ENCODE measurements at regions of chr3 and their contacts with region 1.

Region 1: DNA sequence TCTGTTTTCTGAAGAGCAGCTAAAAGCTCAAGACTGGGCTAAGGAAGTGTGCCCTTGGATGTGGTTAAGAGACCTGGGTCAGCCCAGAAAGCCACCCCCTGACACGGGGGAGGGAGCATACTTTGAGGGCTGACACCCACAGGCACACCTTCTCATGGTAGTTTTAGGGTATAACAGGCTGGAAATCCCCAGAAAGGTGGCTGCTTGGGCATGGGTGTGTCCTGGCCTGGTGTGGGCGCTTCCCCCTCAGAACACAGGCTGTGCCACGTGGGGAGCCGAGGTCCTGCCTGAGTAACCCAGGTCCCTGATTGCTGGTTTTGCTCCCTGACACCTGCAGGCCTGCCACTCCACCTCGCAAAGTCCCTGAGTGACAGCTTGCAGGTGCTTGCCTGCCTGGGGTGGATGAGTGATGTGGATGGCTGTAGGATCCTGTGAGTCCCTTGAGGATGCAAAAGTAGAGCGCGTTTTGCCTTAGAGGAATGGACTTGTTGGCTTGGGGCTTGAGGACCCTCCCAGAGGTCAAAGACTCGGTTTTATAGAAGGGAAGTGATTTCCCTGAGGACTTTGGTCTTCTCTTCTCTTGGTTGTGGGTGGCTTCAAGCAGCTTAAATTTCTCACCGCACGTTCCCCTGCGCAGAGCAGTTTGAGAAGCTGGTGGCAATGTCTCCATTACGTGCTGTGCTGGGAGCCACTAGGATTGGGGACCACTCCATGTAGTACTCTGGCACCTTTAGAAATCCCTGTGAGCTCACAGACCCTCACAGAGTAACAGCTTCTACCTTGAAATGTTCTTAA is 94.4 kb downstream of the DNASE1L3 start:
- DNase-seq: peak; percentile 20 to 85 (median 72)
- ATAC-seq: peak; percentile 95
- H3K4me3 ChIP-seq: no peak overlapping the region
- H3K4me3 Mint-ChIP-seq: peak overlapping the region; percentile 36 to 72 (median 62)
- H3K27ac ChIP-seq: peak overlapping the region; percentile 46
- H3K27ac Mint-ChIP-seq: peak overlapping the region; percentile 63 to 91 (median 83)
- H3K4me1 ChIP-seq: peaks cover 27 to 28% of the 10 kb centered on the region in 2 donors
- H3K4me1 Mint-ChIP-seq: peaks cover 12 to 45% (median 37%) of the 10 kb centered on the region in 7 donors
- H3K27me3 ChIP-seq: no peaks in the 10 kb centered on the region
- H3K27me3 Mint-ChIP-seq: no peaks in the 10 kb centered on the region

Region 2: DNA sequence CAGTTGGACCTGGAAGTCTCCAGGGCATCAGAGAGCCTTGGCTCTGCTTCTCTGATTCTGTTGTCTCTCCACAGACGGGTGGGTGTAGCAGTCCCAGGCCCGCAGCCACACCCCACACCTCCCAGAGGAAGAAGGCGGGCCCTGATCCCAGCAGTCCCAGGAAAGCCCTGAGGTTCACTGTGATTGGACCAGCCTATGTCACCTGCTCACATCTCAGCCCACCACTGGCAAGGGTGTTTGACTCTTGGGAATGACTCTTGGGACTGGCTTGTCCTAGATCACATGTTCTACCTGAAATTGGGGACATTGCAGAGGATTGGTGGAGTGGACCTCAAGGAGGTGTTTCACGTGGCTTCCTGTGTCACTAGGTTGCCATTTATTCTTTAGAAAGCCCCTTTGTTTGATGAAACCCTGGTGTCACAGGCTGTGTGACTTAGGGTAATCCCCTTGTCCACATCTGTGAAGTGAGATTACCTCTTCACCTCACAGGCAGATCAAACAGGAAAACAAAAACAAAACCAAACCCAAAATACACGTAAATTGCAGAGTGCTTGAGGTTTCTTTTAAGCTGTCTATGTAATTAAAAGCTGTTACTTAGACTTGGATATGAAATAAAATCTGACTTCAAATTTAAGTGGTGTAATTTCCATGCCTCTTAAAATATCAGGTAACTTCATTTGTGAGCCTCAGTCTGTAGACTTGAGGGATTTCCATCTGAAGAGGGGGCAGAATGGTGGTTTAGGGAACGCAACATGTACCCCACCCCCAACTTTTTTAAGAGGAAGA is 81.4 kb before region 1 on chr3:
- CTCF ChIA-PET with region 1: no interaction called
- POLR2A ChIA-PET with region 1: no interaction called
- intact Hi-C with region 1: loop called in 1 of 2 experiments (anchors 5 kb)
- DNase-seq: peak in 8 of 9 donors; percentile 41 to 83 (median 69)
- ATAC-seq: peak; percentile 95
- H3K4me3 ChIP-seq: no peak overlapping the region
- H3K4me3 Mint-ChIP-seq: peak overlapping the region; percentile 13 to 74 (median 50)
- H3K27ac ChIP-seq: peak overlapping the region; percentile 48
- H3K27ac Mint-ChIP-seq: peak overlapping the region; percentile 31 to 98 (median 93)
- H3K4me1 ChIP-seq: peaks cover 14 to 15% of the 10 kb centered on the region in 2 donors
- H3K4me1 Mint-ChIP-seq: peaks cover 27 to 84% (median 62%) of the 10 kb centered on the region in 7 donors
- H3K27me3 ChIP-seq: no peaks in the 10 kb centered on the region
- H3K27me3 Mint-ChIP-seq: peaks cover 0 to 2% (median 0%) of the 10 kb centered on the region in 5 donors

Region 3: DNA sequence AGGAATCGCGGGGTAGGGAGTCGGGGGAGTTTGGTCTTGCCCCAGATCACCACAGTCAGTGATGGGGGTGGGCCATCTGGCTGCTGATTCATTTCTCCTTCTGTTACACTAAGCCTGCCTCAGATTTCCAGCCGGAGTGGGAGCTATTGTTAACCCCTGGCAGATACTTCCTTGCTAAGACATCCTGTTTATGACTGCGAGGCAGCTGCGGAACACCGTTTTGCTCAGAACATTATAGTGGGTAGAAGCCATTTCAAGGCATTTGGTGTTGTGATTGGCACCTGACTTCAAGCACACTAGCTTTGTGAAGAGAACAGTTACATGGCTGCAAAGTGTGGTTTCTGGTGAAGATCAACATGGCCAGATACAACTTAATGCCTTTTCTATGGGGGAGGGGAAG is 34.3 kb before region 1 on chr3:
- CTCF ChIA-PET with region 1: no interaction called
- POLR2A ChIA-PET with region 1: interaction called, 5 read pairs
- intact Hi-C with region 1: loop called in 1 of 2 experiments (anchors 5 kb)
- DNase-seq: peak in 8 of 9 donors; percentile 27 to 82 (median 69)
- ATAC-seq: peak; percentile 79
- H3K4me3 ChIP-seq: no peak overlapping the region
- H3K4me3 Mint-ChIP-seq: peak overlapping the region; percentile 46 to 83 (median 76)
- H3K27ac ChIP-seq: peak overlapping the region; percentile 38
- H3K27ac Mint-ChIP-seq: peak overlapping the region; percentile 85 to 97 (median 94)
- H3K4me1 ChIP-seq: peaks cover 0 to 54% of the 10 kb centered on the region in 2 donors
- H3K4me1 Mint-ChIP-seq: peaks cover 35 to 71% (median 56%) of the 10 kb centered on the region in 7 donors
- H3K27me3 ChIP-seq: no peaks in the 10 kb centered on the region
- H3K27me3 Mint-ChIP-seq: no peaks in the 10 kb centered on the region

Region 4: GRCh38 chr3:58217209-58217811 is 101.0 kb after region 1 on chr3:
- CTCF ChIA-PET with region 1: no interaction called
- POLR2A ChIA-PET with region 1: no interaction called
- intact Hi-C with region 1: loop called in 1 of 2 experiments (anchors 1 kb)
- DNase-seq: peak; percentile 21 to 64 (median 52)
- ATAC-seq: peak; percentile 86
- H3K4me3 ChIP-seq: no peak overlapping the region
- H3K4me3 Mint-ChIP-seq: peak overlapping the region in 4 of 10 donors; percentile 12 to 45 (median 26)
- H3K27ac ChIP-seq: no peak overlapping the region
- H3K27ac Mint-ChIP-seq: no peak overlapping the region
- H3K4me1 ChIP-seq: peaks cover 0 to 3% of the 10 kb centered on the region in 2 donors
- H3K4me1 Mint-ChIP-seq: peaks cover 0 to 17% (median 7%) of the 10 kb centered on the region in 7 donors
- H3K27me3 ChIP-seq: no peaks in the 10 kb centered on the region
- H3K27me3 Mint-ChIP-seq: peaks cover 3 to 10% (median 4%) of the 10 kb centered on the region in 5 donors